Natural killer cell (primary cell): ENCODE measurements at regions of chr21 and their contacts with region 1.

Region 1: GRCh38 chr21:43916691-43917514 is 51.9 kb downstream of the AGPAT3 start:
- DNase-seq: peak; percentile 49 to 87
- ATAC-seq: peak; percentile 84 to 89 (median 88)
- H3K4me3 ChIP-seq: peak overlapping the region; percentile 54
- H3K4me3 Mint-ChIP-seq: peak overlapping the region; percentile 89
- H3K27ac ChIP-seq: peak overlapping the region; percentile 64
- H3K27ac Mint-ChIP-seq: peak overlapping the region; percentile 75 to 76
- H3K4me1 ChIP-seq: peaks cover 21% of the 10 kb centered on the region
- H3K4me1 Mint-ChIP-seq: peaks cover 35 to 62% of the 10 kb centered on the region in 2 donors
- H3K27me3 ChIP-seq: no peaks in the 10 kb centered on the region
- H3K27me3 Mint-ChIP-seq: peaks cover 22 to 23% of the 10 kb centered on the region in 2 donors
- CTCF ChIP-seq: no peak

Region 2: DNA sequence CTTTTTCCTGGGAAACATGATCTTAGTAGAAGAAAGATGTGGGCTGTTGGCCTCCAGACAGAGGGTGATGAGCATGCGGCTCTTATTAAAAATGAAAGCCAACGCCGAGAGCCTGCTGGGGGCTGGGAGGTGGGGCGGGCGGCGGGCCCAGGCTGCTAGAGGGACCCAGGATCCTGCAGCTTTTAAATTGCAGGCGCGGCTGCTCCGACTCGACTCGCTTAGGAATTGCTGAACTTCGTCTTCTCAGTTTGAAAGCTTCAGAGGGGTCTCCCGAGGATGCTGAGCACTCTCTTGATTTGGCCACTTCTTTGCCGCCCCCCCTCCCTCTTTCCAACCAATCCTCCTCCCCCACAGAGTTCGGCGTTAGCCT is 50.7 kb before region 1 on chr21:
- intact Hi-C with region 1: loop called (anchors 5 kb)
- DNase-seq: peak in 1 of 2 donors; percentile 65
- ATAC-seq: peak in 2 of 3 donors; percentile 37 to 38
- H3K4me3 ChIP-seq: peak overlapping the region; percentile 47
- H3K4me3 Mint-ChIP-seq: peak overlapping the region; percentile 84
- H3K27ac ChIP-seq: peak overlapping the region; percentile 38
- H3K27ac Mint-ChIP-seq: peak overlapping the region; percentile 56 to 77
- H3K4me1 ChIP-seq: peaks cover 21% of the 10 kb centered on the region
- H3K4me1 Mint-ChIP-seq: peaks cover 24 to 37% of the 10 kb centered on the region in 2 donors
- H3K27me3 ChIP-seq: no peaks in the 10 kb centered on the region
- H3K27me3 Mint-ChIP-seq: no peaks in the 10 kb centered on the region
- CTCF ChIP-seq: no peak

Region 3: DNA sequence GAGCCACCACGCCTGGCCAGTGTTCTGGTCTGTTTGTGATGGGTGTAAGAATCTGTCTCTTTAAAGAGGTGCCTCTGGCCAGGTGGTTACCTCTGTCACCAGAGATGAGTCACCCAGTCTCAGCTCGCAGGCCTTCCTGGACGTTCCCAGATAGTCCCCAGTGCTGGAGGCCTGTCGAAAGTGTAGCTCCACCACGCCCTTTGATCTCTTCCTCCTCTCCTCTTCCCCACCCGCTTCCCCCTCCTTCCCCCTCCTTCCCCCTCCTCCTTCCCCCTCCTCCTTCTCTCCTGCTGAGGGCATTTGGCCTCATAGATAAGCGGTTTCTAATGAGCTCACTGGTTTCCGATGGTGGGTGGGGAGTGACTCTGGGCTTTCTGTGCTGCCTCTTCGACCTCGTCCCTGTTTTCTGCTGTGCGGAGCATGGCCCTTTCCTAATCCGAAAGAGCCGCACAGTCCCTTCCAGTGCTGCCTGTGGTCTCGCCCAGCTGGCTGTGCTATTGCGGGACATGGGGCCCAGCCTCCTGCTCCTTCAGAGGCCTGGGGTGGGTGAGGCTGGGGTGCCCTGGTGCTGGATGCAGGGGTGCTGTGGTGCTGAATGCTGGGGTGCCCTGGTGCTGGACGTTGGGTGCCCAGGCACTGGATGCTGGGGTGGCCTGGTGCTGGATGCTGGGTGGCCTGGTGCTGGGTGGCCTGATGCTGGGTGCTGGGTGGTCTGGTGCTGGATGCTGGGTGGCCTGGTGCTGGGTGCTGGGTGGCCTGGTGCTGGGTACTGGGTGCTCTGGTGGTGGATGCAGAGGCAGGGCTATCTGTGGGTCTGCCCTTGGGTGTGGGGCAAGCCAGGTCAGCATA is 32.7 kb before region 1 on chr21:
- intact Hi-C with region 1: loop called (anchors 5 kb)
- DNase-seq: peak in 1 of 2 donors; percentile 30
- ATAC-seq: peak in 1 of 3 donors; percentile 34
- H3K4me3 ChIP-seq: no peak overlapping the region
- H3K4me3 Mint-ChIP-seq: peak overlapping the region; percentile 42
- H3K27ac ChIP-seq: no peak overlapping the region
- H3K27ac Mint-ChIP-seq: peak overlapping the region in 1 of 2 donors; percentile 40
- H3K4me1 ChIP-seq: peaks cover 17% of the 10 kb centered on the region
- H3K4me1 Mint-ChIP-seq: peaks cover 17 to 35% of the 10 kb centered on the region in 2 donors
- H3K27me3 ChIP-seq: no peaks in the 10 kb centered on the region
- H3K27me3 Mint-ChIP-seq: no peaks in the 10 kb centered on the region
- CTCF ChIP-seq: no peak

Region 4: GRCh38 chr21:43893536-43894205 is 23.2 kb before region 1 on chr21:
- intact Hi-C with region 1: loop called (anchors 2 kb)
- DNase-seq: peak in 1 of 2 donors; percentile 51
- ATAC-seq: peak; percentile 34 to 41 (median 39)
- H3K4me3 ChIP-seq: no peak overlapping the region
- H3K4me3 Mint-ChIP-seq: peak overlapping the region; percentile 80
- H3K27ac ChIP-seq: no peak overlapping the region
- H3K27ac Mint-ChIP-seq: peak overlapping the region; percentile 11 to 19
- H3K4me1 ChIP-seq: peaks cover 14% of the 10 kb centered on the region
- H3K4me1 Mint-ChIP-seq: peaks cover 25 to 30% of the 10 kb centered on the region in 2 donors
- H3K27me3 ChIP-seq: no peaks in the 10 kb centered on the region
- H3K27me3 Mint-ChIP-seq: no peaks in the 10 kb centered on the region
- CTCF ChIP-seq: no peak

Region 5: GRCh38 chr21:43938751-43939442 is 22.0 kb after region 1 on chr21:
- intact Hi-C with region 1: loop called (anchors 2 kb)
- DNase-seq: peak; percentile 86 to 94
- ATAC-seq: peak; percentile 98 to 100 (median 99)
- H3K4me3 ChIP-seq: peak overlapping the region; percentile 47
- H3K4me3 Mint-ChIP-seq: peak overlapping the region; percentile 84
- H3K27ac ChIP-seq: no peak overlapping the region
- H3K27ac Mint-ChIP-seq: peak overlapping the region in 1 of 2 donors; percentile 81
- H3K4me1 ChIP-seq: peaks cover 12% of the 10 kb centered on the region
- H3K4me1 Mint-ChIP-seq: peaks cover 15 to 19% of the 10 kb centered on the region in 2 donors
- H3K27me3 ChIP-seq: no peaks in the 10 kb centered on the region
- H3K27me3 Mint-ChIP-seq: no peaks in the 10 kb centered on the region
- CTCF ChIP-seq: peak; percentile 100